Sigmoid colon (tissue), 7 donors: ENCODE measurements at regions of chrX and their contacts with region 1.

Region 1: GRCh38 chrX:40169193-40170101 is 71.7 kb upstream of the BCOR start:
- DNase-seq: peak; percentile 82
- H3K4me3 ChIP-seq: peak overlapping the region in 1 of 4 donors; percentile 13
- H3K27ac ChIP-seq: peak overlapping the region; percentile 6 to 97 (median 91)
- H3K4me1 ChIP-seq: peaks cover 0 to 59% (median 42%) of the 10 kb centered on the region in 4 donors
- H3K27me3 ChIP-seq: peaks cover 0 to 9% (median 0%) of the 10 kb centered on the region in 3 donors
- CTCF ChIP-seq: peak in 3 of 4 experiments; percentile 24 to 31 (median 30)
- EP300 ChIP-seq: no peak
- POLR2A ChIP-seq: no peak

Region 2: DNA sequence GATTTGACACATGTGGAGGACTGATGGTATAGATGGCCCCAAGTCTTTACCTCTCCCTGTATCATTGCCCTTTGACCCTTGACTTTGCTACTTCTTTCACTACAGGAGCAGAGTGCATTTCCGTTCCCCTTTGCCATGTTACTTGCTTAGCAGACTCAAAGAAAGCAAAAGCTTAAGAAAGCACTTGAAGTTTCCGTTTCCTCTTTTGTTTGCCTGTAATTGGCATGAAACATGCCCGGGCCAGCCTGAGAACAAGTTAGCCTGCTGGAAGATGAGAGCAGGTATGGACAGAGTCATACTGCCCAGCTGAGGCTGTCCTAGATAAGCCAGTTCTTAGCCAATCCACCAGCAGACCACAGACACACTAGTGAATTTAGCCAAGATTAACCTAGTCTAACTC is 277.7 kb before region 1 on chrX:
- intact Hi-C with region 1: no loop called
- DNase-seq: no peak
- H3K4me3 ChIP-seq: no peak overlapping the region
- H3K27ac ChIP-seq: no peak overlapping the region
- H3K4me1 ChIP-seq: peaks cover 0 to 1% (median 0%) of the 10 kb centered on the region in 4 donors
- H3K27me3 ChIP-seq: no peaks in the 10 kb centered on the region
- CTCF ChIP-seq: no peak
- EP300 ChIP-seq: no peak
- POLR2A ChIP-seq: no peak

Region 3: DNA sequence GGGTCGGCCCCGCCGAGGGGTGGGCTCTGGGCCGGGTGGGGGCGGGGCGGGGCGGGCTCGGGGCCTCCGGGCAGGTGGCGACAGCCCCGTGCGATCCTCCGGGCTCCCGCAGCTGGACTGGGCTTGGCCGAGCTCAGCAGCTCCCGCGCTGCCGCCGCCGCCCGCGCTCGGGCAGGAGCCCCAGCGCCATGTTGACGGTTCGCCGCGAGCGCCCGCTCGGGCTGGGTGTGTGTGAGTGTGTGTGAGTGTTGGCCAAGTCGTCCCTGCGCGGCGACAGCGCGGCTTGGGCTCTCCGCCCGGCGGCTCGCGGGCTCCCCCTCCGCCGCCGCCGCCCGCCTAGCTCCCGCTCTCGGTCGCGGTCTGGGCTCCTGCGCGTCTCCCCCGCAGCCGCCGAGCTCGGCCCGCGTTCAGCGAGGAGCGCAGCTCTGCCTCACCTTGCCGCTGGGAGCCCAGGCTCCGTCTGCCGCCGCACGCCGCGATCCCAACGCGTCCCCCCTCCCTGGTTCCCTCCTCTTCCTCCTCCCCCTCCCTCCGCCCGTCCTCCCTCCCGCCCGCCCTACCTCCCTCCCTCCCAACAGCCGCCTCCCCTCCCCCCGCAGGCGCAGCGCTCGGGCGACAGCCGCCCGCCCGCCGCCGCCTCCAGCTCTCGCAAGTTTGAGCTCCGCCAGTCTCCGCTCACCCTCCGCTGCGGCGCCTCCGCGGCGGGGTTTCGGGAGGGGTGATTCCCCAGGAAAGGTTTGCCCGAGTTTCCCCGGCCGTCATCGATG is 71.8 kb before region 1 on chrX and contains the start of gene BCOR:
- intact Hi-C with region 1: loop called (anchors 2 kb)
- DNase-seq: peak; percentile 90
- H3K4me3 ChIP-seq: peak within 1 kb of the TSS; percentile 56 to 80 (median 69)
- H3K27ac ChIP-seq: peak within 1 kb of the TSS; percentile 87 to 96 (median 92)
- H3K4me1 ChIP-seq: peaks cover 0 to 81% (median 26%) of the 10 kb centered on the region in 4 donors
- H3K27me3 ChIP-seq: peaks cover 0 to 21% (median 0%) of the 10 kb centered on the region in 3 donors
- CTCF ChIP-seq: no peak
- EP300 ChIP-seq: no peak
- POLR2A ChIP-seq: peak in 1 of 2 donors; percentile 22
- total RNA-seq, gene BCOR: 15.8 to 31.6 (median 23.0) TPM

Region 4: GRCh38 chrX:40468033-40468846 is 298.8 kb after region 1 on chrX:
- intact Hi-C with region 1: loop called (anchors 10 kb)
- DNase-seq: peak; percentile 75
- H3K4me3 ChIP-seq: no peak overlapping the region
- H3K27ac ChIP-seq: peak overlapping the region in 2 of 4 donors; percentile 17 to 42
- H3K4me1 ChIP-seq: peaks cover 0 to 13% (median 12%) of the 10 kb centered on the region in 4 donors
- H3K27me3 ChIP-seq: no peaks in the 10 kb centered on the region
- CTCF ChIP-seq: peak in 2 of 4 experiments; percentile 9 to 12
- EP300 ChIP-seq: no peak
- POLR2A ChIP-seq: no peak